ENCODE measurements at regions of chr15 and their contacts with region 1.

Region 1: DNA sequence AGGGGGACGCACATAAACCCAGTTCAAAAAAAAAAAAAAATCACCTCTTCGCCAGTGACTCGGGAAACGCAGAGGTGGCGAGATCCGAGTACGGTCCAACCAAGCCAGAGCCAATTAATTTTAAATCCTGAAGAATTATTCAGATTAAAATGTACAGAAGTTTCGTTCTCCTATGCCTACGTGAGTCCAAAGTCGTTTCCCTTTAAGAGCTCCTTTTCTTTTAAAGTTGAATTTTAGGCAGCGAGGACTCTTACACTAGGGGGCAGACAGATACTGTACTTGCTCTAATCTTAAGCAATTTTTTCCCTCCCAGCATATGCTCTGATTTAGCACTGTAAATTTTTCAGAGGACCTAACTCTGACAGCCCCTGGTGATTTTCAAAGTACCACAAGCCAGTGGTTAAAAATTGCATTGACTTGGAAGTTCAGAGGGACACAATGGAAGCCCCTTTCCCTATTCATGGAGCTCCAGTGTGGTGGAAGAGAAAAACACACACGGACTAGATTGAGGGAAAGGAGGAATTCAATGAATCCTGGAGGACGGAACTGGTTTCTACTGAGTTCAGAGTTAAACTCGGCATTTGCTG is 3.3 kb upstream of the NR2F2 start:
- DNase-seq: peak in 2 of 4 donors; percentile 83 to 89
- ATAC-seq: peak; percentile 74
- H3K4me3 ChIP-seq: peak overlapping the region; percentile 40 to 41
- H3K27ac ChIP-seq: peak overlapping the region; percentile 78 to 94
- H3K4me1 ChIP-seq: peaks cover 0 to 10% of the 10 kb centered on the region in 2 donors
- H3K27me3 ChIP-seq: peaks cover 10 to 98% of the 10 kb centered on the region in 2 donors
- CTCF ChIP-seq: peak; percentile 46 to 59

Region 2: GRCh38 chr15:95284933-95285421 is 1042.3 kb before region 1 on chr15:
- intact Hi-C with region 1: loop called in 1 of 2 experiments (anchors 10 kb)
- DNase-seq: peak in 2 of 4 donors; percentile 65 to 73
- ATAC-seq: peak; percentile 13
- H3K4me3 ChIP-seq: no peak overlapping the region
- H3K27ac ChIP-seq: peak overlapping the region in 1 of 2 donors; percentile 34
- H3K4me1 ChIP-seq: peaks cover 0 to 6% of the 10 kb centered on the region in 2 donors
- H3K27me3 ChIP-seq: no peaks in the 10 kb centered on the region
- CTCF ChIP-seq: no peak

Region 3: GRCh38 chr15:96392380-96393208 is 65.3 kb after region 1 on chr15:
- intact Hi-C with region 1: no loop called
- DNase-seq: no peak
- ATAC-seq: no peak
- H3K4me3 ChIP-seq: no peak overlapping the region
- H3K27ac ChIP-seq: no peak overlapping the region
- H3K4me1 ChIP-seq: no peaks in the 10 kb centered on the region
- H3K27me3 ChIP-seq: no peaks in the 10 kb centered on the region
- CTCF ChIP-seq: no peak

Measured in left lung (tissue), 14 donors.